ENCODE measurements at regions of chr9 and their contacts with region 1.

Region 1: DNA sequence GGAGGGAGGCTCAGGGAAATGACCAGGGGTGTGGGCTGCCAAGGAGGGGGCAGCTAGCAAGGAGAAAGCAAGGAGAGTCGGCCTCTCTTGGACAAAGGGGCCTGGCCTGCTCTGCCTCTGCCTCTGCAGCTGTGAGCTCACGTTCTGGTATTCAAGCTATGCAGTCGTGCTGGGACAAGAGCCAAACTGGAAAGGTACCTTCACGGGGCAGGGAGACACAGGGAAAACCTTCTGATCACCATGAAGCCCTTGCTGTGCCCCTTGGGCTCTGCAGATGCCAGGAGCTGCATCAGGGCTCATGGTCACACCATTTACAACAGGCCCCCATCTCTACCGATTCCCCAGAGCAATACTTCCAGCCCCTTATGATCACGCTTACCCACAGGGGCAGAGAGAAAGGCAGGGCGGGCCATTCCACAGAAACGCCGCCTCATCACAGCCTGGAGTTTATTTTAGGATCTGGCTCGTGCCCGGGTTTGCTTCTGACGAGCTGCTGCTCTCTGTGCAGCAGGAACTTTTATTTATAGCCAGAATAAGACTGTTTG is 63.2 kb downstream of the PRRT1B start:
- DNase-seq: peak; percentile 87
- ATAC-seq: peak; percentile 88
- H3K4me3 ChIP-seq: peak overlapping the region; percentile 8; the same call in 1 of the 2 replicates
- H3K27ac ChIP-seq: peak overlapping the region; percentile 78
- H3K4me1 ChIP-seq: peaks cover 35% of the 10 kb centered on the region
- H3K27me3 ChIP-seq: no peaks in the 10 kb centered on the region
- CTCF ChIP-seq: 0 out of 2 replicates have a peak, but pooled peaks have one; percentile 3
- POLR2A ChIP-seq: no peak
- RAD21 ChIP-seq: peak; percentile 18; the same call in 1 of the 2 replicates

Region 2: DNA sequence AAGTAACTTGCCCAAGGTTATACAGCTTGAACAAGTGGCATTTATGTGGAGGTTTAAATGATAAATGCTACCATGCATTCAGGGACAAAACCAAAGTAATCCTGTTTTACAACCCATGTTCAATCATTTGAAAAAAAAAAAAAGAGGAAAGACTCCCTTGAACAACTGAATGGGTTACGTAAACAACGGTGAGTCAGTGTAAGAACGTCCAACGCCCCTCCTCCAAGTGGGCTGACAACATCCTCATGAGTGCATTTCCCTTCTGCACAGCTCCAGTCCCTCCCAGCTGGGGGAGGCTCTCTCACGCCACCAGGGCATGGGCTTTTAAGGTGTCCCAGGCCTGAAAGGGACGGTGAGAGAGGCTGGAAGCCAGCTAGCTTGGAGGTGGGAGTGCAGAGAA is 26.7 kb after region 1 on chr9:
- CTCF ChIA-PET with region 1: no interaction called
- POLR2A ChIA-PET with region 1: no interaction called
- dilution Hi-C with region 1: no loop called
- in situ Hi-C with region 1: no loop called
- intact Hi-C with region 1: loop called (anchors 2 kb)
- DNase-seq: peak; percentile 99
- ATAC-seq: peak; percentile 100
- H3K4me3 ChIP-seq: no peak overlapping the region
- H3K27ac ChIP-seq: peak overlapping the region; percentile 22
- H3K4me1 ChIP-seq: peaks cover 9% of the 10 kb centered on the region
- H3K27me3 ChIP-seq: no peaks in the 10 kb centered on the region
- CTCF ChIP-seq: 0 out of 2 replicates have a peak, but pooled peaks have one; percentile 10
- POLR2A ChIP-seq: 0 out of 2 replicates have a peak, but pooled peaks have one; percentile 38
- RAD21 ChIP-seq: peak; percentile 44

Region 3: DNA sequence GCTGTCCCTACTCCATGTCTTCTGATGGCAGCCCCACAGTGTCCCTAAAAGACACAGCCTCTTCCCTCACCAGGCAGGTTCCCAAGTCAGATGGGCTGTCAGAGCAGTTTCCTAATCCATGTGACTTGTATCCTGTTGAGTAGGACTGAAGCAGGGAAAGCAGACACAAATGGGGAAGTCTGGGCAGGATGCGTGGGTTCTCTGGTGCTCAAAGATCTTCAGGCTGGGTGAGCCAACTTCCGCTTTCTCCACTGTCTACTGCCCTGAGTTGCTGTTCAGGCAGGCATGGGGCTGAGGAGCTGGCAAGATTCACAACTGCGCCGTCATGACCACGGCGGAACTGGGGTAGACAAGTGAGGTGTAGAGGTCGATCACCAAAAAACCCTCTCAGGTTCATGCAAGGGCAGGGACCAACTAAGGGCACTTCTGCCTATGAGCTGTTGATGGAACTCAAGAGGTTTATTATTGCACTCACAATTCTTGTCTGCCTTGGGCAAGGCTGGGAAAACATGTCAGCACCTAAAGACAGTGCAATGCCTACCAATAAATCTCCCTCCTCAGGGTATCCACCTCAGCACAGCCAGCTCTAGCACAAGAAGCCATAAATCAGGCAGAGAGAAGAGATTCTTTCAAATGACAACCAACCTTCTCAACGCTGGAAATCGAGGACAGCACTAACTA is 47.9 kb after region 1 on chr9:
- CTCF ChIA-PET with region 1: no interaction called
- POLR2A ChIA-PET with region 1: no interaction called
- dilution Hi-C with region 1: no loop called
- in situ Hi-C with region 1: no loop called
- intact Hi-C with region 1: loop called (anchors 5 kb)
- DNase-seq: no peak
- ATAC-seq: no peak
- H3K4me3 ChIP-seq: no peak overlapping the region
- H3K27ac ChIP-seq: peak overlapping the region; percentile 97; the same call in 1 of the 2 replicates
- H3K4me1 ChIP-seq: peaks cover 32% of the 10 kb centered on the region
- H3K27me3 ChIP-seq: no peaks in the 10 kb centered on the region
- CTCF ChIP-seq: no peak
- POLR2A ChIP-seq: no peak
- RAD21 ChIP-seq: no peak

Region 4: DNA sequence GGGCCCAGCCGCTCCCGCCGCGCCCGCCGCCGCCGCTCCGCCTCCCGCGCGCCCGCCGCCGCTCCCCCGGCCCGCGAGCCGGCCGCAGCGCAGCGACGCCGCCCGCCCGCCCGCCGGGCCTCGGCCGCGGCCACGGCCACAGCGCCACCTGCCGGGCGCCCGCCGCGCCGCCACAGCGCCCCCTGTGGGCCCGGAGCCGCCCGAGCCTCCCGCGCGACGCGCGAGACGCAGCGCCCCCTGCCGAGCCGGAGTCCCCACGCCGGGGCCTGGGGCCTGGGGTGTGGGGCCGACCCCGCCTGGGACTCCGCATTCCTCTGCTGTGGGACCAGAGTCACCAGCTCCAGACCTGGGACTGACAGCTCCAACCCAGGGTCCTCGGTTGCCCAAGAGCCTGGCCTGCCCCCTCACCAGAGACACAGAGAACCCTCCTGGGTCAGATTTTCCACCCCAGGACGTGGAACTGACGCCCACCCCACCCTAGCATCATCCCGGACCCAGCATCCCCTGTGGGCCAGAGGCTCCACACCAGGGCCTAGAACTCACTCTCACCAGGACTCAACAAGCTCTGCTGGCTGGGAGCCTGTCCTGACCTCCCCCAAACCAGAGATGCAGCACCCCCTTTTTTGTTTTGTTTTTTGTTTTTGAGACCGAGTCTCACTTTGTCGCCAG is 131.5 kb after region 1 on chr9 and contains the start of gene RAPGEF1:
- CTCF ChIA-PET with region 1: interaction called, 9 read pairs
- POLR2A ChIA-PET with region 1: no interaction called
- dilution Hi-C with region 1: no loop called
- in situ Hi-C with region 1: no loop called
- intact Hi-C with region 1: loop called (anchors 2 kb)
- DNase-seq: no peak
- ATAC-seq: peak; percentile 84
- H3K4me3 ChIP-seq: peak within 1 kb of the TSS; percentile 81
- H3K27ac ChIP-seq: peak within 1 kb of the TSS; percentile 65
- H3K4me1 ChIP-seq: peaks cover 15% of the 10 kb centered on the region
- H3K27me3 ChIP-seq: no peaks in the 10 kb centered on the region
- CTCF ChIP-seq: peak; percentile 99
- POLR2A ChIP-seq: no peak
- RAD21 ChIP-seq: peak; percentile 88
- total RNA-seq, gene RAPGEF1: 13.1 and 13.3 TPM in 2 replicates